Posterior vena cava (tissue), 2 donors: ENCODE measurements at regions of chr7 and their contacts with region 1.

Region 1: DNA sequence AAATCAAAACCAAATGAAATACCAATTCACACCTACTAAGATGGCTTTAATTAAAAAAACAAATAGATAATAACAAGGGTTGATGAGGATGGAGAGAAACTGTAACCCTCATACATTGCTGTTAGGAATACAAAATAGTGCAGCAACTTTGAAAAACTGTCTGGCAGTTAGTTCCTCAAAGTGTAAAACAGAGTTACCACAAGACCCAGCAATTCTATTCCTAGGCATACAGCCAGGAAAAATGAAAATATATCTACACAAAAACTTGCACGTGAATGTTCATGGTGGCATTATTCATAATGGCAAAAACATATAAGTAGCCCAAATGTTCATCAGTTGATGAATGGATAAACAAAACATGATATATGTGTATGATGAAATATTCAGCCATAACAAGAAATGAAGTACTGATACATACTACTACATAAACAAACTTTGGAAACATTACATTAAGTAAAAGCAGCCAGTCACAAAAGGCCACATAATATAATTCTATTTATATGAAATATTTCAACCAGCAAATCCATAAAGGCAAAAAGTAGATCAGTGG is 83.5 kb downstream of the BRAF start:
- DNase-seq: no peak

Region 2: GRCh38 chr7:140079121-140079536 is 762.1 kb before region 1 on chr7:
- intact Hi-C with region 1: no loop called
- DNase-seq: no peak

Region 3: DNA sequence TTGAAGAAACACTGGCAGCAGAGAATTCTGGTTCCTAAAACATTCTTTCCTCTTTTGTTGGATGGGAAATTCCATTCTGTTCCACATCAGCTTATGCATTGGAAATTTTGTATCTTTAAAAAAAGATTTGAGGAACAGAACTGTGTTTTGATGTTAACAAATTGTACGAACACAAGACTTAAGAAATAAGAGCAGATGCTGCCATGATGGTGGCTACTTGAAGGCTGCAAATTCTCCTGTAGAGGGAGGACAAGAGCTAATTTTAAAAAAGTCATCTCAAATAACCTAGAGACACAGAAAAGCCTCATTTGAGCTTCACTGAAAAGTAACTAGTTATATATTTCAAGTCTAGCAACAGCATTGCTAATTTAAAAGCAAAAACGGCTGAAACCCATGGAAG is 115.0 kb before region 1 on chr7:
- intact Hi-C with region 1: no loop called
- DNase-seq: no peak

Region 4: DNA sequence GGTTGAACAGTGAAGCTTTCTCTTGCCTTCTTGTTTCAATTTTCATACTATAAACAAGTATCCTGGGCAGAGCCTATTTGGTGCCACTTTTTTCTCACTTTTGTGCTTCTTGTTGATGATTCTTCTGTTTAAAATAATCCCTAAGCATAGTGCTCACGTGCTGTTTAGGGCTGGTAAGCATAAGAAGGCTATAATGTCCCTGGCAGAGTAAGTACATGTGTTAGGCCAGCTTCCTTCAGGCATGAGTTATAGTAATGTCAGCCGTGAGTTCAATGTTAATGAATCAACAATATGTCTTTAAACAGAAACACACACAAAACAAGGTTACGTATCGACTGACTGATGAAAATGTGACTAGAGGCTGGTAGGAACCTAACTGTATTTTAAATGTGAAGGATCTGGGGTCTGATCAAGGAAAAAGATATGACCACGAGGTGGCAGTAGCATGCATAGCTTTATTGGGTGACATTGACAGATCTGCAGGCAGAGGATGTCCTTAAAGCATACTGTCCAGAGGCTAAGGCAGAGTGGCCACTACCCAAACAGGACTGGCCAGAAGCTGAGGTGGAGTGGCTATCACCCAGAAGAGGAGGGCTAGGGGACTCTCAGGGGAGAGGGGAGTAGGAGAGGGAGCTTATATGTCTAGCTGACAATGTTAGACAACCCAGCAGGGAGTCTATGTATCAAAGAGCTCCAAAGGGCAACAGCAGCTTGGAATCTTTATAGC is 30.2 kb before region 1 on chr7:
- intact Hi-C with region 1: no loop called
- DNase-seq: no peak

Region 5: DNA sequence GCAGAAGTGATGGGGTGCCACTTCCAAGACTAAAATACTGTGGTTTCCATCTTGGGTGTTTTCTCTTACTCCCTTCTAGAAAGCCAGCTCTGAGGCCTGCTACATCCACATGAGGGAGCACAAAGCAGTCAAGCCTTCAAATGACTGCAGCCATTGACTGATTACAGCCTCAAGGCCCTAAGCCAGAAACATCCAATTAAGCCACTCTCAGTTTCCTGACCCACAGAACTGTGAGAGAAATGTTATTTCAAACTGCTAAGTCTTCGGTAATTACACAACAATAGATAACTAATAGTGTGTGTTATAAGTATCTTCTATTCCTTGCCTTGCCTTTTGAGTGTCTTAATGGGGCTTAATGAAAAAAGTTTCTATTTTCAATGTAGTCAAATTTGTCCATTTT is 58.6 kb after region 1 on chr7:
- intact Hi-C with region 1: loop called in 1 of 2 experiments (anchors 2 kb)
- DNase-seq: no peak